A673 (cell line): ENCODE measurements at regions of chr3 and their contacts with region 1.

Region 1: DNA sequence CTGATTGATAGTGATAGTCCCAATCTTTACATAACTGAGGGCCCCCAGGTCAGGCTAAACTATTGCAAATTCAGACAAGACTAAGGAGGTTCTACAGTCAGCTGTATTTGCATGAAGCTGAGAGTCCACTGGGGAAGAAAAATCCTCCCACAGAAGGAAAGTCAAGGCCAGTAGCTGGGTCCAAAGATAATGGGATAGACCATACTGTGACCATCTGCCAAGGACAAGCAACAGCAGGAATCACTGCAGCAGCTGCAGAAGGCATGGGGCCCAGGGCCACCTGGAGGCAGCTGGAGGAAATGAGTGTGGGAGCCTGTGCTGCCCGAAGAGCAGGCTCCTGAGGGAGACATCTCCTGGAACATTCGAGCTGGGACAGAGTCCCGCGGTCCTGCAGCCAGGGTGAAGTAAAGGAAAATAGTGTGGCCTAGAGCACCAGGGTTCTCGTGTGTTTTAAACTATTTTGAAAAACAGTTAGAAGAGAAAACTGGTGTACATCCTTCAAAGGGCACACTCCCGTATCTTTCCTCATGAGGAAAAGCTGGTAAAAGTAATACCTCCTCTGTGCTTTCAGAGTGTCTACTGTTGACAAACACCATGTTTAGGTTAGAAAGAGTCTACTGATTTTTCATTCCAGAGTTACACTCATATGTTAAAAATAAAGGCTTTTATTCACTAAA is 13.2 kb upstream of the TMEM212 start:
- DNase-seq: peak; percentile 81
- H3K4me3 ChIP-seq: no peak overlapping the region
- H3K27ac ChIP-seq: no peak overlapping the region
- H3K4me1 ChIP-seq: peaks cover 22% of the 10 kb centered on the region
- H3K27me3 ChIP-seq: no peaks in the 10 kb centered on the region
- CTCF ChIP-seq: peak; percentile 79

Region 2: DNA sequence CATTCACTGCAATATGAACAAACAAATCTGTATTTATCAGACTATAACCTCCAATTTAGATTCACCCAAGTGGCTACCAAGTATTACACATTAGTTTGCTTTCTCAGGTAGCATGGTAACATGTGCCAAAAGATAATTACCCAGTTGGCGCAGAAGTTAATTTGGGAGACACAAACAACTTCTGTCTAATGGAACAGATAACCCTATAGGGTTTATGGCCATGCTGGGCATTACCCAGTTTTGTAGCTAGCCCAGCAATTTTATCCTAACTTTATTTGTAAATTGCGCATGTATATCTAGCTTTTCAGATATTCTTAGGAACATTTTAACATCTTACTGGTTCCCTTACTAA is 960.8 kb before region 1 on chr3:
- CTCF ChIA-PET with region 1: no interaction called
- POLR2A ChIA-PET with region 1: interaction called, 10 read pairs
- intact Hi-C with region 1: no loop called
- DNase-seq: peak; percentile 17
- H3K4me3 ChIP-seq: peak overlapping the region; percentile 76
- H3K27ac ChIP-seq: peak overlapping the region; percentile 92
- H3K4me1 ChIP-seq: peaks cover 22% of the 10 kb centered on the region
- H3K27me3 ChIP-seq: no peaks in the 10 kb centered on the region
- CTCF ChIP-seq: no peak

Region 3: DNA sequence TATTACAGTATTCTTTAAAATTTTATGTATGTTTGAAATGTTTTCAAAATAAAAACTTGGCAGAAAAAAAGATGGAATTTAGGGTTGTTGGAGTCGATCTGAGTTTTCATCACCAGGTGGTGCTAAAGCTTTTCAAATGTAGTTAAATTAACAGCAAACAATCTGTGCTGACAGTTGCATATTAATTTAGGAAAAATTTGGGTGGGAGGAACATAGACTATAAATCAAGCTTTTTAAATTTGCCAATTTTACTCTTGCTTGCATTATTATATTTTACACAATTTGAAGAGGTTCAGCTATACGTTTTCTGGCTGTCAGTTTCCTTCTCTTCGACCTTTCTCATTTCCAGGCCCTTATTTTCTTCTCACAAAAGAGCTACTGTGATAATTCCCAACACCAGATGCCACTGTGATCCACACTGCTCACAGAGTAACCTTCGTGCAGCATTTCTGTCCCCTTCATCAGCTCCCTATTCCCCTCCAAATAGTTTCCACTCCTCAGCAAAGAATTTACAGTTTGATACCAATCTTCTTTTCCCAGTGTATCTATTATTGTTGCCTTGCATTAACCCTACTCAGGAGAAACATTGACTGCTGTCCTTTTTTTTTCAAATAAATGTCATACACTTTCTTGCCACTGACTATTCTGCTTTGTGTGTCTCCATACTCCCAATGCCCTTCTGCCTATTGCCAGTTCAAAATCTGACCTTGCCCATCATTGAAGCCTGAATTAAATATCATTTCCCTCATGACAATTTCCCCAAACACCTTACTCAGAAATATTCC is 868.2 kb before region 1 on chr3:
- CTCF ChIA-PET with region 1: no interaction called
- POLR2A ChIA-PET with region 1: interaction called, 4 read pairs
- intact Hi-C with region 1: loop called (anchors 5 kb)
- DNase-seq: peak; percentile 41
- H3K4me3 ChIP-seq: no peak overlapping the region
- H3K27ac ChIP-seq: no peak overlapping the region
- H3K4me1 ChIP-seq: no peaks in the 10 kb centered on the region
- H3K27me3 ChIP-seq: no peaks in the 10 kb centered on the region
- CTCF ChIP-seq: peak; percentile 70

Region 4: DNA sequence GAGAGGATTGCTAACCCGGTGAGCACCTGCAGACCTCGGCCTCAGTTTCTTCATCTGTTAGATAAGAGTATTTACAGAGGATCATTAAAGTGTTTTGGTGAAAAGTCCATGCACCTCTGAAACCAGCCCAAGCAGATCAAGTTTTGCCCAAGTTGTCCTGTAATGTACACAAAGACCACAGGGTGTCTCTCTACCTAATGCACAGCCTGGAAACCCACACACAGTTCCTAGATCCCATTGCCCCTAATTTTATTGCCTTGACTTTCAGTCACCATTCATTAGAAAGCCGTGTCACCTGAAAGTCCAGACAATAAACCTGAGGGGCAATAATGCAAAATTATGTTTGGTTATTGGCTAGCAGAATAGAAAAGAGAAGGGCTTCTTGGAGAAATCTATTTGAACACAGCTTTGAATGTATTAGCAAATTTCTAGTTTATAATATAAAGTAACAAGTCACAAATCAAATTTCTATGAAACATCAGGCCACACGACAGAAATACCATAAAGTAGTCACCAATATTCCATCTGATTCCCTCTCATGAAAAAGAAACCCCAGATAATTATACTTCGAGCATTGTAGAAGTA is 642.2 kb before region 1 on chr3:
- CTCF ChIA-PET with region 1: interaction called, 3 read pairs
- POLR2A ChIA-PET with region 1: no interaction called
- intact Hi-C with region 1: loop called (anchors 5 kb)
- DNase-seq: peak; percentile 50
- H3K4me3 ChIP-seq: no peak overlapping the region
- H3K27ac ChIP-seq: no peak overlapping the region
- H3K4me1 ChIP-seq: no peaks in the 10 kb centered on the region
- H3K27me3 ChIP-seq: no peaks in the 10 kb centered on the region
- CTCF ChIP-seq: peak; percentile 69

Region 5: DNA sequence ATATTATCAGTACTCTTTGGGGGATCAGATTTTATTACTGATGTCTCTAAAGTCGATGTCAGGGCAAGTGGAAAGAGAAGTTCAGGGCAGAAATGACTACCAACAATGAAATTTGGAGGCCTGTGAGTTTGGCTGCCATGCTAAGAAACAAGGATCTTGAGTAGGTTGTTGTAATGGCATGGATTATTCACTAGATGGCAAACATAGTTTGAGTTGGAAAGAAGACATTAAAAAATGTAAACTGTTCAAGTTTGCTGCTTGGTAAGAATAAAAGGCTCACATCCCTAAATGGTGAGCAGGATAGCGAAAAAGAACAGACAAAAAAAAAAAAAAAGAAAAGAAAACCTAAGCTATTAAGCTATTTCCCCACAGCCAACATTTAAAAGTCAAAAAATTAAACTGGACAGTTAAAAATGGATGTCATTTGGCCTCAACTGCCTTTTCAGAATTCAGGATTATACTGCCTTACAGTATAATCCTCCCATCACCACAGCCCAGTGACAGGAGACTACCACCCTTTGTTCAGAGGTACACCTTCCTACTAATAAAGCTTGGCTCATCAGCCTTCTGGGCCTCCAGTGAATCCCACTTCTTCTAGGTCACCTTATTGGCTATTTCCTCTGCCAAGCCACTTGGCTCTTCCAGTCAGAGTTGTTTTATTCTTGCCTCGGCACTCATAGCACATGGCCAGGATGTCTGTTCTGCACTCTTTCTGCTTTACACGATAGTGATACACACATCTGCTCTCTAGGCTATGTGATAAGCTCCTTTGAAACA is 183.4 kb before region 1 on chr3:
- CTCF ChIA-PET with region 1: interaction called, 4 read pairs
- POLR2A ChIA-PET with region 1: no interaction called
- intact Hi-C with region 1: loop called (anchors 1 kb)
- DNase-seq: peak; percentile 61
- H3K4me3 ChIP-seq: no peak overlapping the region
- H3K27ac ChIP-seq: no peak overlapping the region
- H3K4me1 ChIP-seq: no peaks in the 10 kb centered on the region
- H3K27me3 ChIP-seq: no peaks in the 10 kb centered on the region
- CTCF ChIP-seq: peak; percentile 61

Region 6: GRCh38 chr3:171703756-171704401 is 126.1 kb before region 1 on chr3:
- CTCF ChIA-PET with region 1: no interaction called
- POLR2A ChIA-PET with region 1: no interaction called
- intact Hi-C with region 1: loop called (anchors 2 kb)
- DNase-seq: peak; percentile 77
- H3K4me3 ChIP-seq: no peak overlapping the region
- H3K27ac ChIP-seq: no peak overlapping the region
- H3K4me1 ChIP-seq: no peaks in the 10 kb centered on the region
- H3K27me3 ChIP-seq: no peaks in the 10 kb centered on the region
- CTCF ChIP-seq: peak; percentile 82

Region 7: DNA sequence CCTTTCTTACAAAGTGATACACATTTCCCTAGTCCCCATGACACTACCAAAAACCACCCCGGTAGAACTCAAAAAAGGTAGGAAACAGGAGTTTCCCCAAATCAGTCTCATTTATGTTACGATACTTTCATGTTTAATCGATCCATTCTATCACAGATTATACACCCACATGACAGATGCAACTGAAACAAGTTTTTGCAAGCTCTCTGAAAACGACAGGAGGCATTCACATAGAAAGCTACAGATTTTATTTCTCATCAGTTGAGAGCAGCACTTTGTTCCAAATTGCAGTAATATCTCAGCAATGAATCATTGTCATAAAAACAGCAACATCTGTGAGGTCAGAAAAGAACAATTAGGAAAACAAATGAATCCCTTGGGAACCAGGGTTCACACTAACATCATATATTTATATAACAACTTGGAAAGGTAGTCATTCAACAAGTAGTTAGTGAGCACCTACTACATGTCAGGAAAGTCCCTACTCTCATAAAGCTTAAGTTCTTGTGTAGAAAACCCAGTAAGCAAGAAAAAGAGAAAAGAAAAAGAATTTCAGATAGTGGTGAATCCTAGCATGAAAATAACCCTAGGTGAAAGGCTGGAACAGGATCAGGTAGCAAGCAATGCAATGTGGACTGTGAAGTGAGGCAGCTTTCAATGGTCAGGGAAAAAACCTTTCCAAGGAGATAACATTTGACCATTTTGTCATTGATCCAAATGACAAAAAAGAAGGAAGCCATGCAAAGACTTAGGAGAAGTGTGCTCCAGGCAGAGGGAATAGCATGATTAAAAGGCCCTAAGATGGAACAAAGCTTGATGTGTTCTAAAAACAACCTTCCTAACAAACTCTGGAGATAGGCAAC is 28.0 kb before region 1 on chr3:
- CTCF ChIA-PET with region 1: no interaction called
- POLR2A ChIA-PET with region 1: no interaction called
- intact Hi-C with region 1: no loop called
- DNase-seq: no peak
- H3K4me3 ChIP-seq: no peak overlapping the region
- H3K27ac ChIP-seq: no peak overlapping the region
- H3K4me1 ChIP-seq: peaks cover 21% of the 10 kb centered on the region
- H3K27me3 ChIP-seq: no peaks in the 10 kb centered on the region
- CTCF ChIP-seq: no peak

Region 8: DNA sequence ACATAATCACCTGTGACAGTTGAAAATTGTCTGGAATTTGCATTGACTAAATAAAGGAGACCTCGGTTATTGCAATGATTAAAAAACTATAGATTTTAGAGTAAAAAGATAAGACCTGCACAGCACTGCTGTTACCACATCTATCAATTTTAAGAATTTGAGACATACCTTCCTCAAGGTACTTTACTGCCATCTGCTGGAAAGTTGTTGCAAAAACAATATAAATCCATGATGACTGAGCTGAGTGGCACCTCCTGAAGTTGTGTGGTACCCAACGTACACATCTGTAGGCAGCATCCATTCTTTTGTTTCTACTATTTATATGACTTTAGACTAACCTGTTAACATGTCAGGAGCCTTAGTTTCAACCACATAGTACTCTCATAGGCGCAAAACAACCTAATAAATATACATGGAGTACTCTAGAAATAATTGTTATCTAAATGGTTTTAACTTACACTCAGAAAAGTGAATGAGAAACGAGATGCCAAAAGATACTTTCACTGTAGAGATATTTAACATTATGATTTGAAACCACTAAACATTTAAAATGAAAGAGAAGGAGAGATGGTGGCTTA is 511.6 kb after region 1 on chr3:
- CTCF ChIA-PET with region 1: interaction called, 4 read pairs
- POLR2A ChIA-PET with region 1: no interaction called
- intact Hi-C with region 1: loop called (anchors 5 kb)
- DNase-seq: peak; percentile 75
- H3K4me3 ChIP-seq: no peak overlapping the region
- H3K27ac ChIP-seq: no peak overlapping the region
- H3K4me1 ChIP-seq: no peaks in the 10 kb centered on the region
- H3K27me3 ChIP-seq: no peaks in the 10 kb centered on the region
- CTCF ChIP-seq: peak; percentile 65

Region 9: GRCh38 chr3:173380689-173381088 is 1550.7 kb after region 1 on chr3:
- CTCF ChIA-PET with region 1: no interaction called
- POLR2A ChIA-PET with region 1: no interaction called
- intact Hi-C with region 1: no loop called
- DNase-seq: no peak
- H3K4me3 ChIP-seq: no peak overlapping the region
- H3K27ac ChIP-seq: no peak overlapping the region
- H3K4me1 ChIP-seq: no peaks in the 10 kb centered on the region
- H3K27me3 ChIP-seq: no peaks in the 10 kb centered on the region
- CTCF ChIP-seq: no peak